ENCODE measurements at regions of chr1 and their contacts with region 1.

Region 1: DNA sequence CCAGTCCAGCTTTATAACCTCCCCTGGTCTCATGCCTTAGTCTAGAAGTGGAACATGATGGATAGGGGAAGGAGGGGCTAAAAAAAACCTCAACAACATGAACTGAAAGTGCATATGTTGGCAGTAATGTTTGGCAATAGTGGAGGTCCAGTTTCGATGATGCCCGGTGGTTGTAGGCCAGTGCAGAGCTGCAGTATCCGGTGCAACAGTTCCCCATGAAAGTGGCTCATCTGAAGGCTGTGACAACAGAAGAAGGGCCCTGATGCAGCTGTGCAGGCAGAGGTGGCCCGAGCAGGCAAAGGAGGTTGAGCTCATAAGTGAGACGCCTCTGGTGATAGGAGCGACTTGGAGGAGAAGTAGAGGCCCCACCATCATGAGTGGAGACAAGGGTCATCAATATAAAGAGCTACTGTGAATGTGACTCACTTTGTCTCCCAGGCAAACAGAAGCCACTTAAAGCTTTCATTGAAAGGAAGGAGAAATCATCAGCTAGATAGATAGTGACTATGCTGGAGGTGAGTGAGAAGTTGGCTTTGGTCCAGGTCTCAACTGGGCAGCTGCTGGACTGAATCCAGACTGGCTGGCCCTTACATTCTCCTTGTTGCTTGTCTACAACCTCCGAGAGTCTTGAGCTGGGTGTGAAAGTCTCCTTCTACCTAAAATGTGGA is 10.2 kb upstream of the CREG1 start:
- DNase-seq: peak; percentile 64 to 79 (median 69)
- ATAC-seq: peak; percentile 81
- H3K4me3 ChIP-seq: no peak overlapping the region
- H3K27ac ChIP-seq: 0 out of 3 replicates have a peak overlapping the region, but pooled peaks have one; percentile 8
- H3K4me1 ChIP-seq: peaks cover 10 to 25% of the 10 kb centered on the region in 2 experiments
- H3K27me3 ChIP-seq: no peaks in the 10 kb centered on the region
- CTCF ChIP-seq: no peak
- EP300 ChIP-seq: no peak
- POLR2A ChIP-seq: no peak
- RAD21 ChIP-seq: no peak

Region 2: GRCh38 chr1:167542109-167543032 is 21.3 kb before region 1 on chr1:
- CTCF ChIA-PET with region 1: no interaction called
- POLR2A ChIA-PET with region 1: interaction called, 13 read pairs
- in situ Hi-C with region 1: no loop called
- intact Hi-C with region 1: no loop called
- DNase-seq: peak in 1 of 4 experiments; percentile 13
- ATAC-seq: peak; percentile 8; the same call in 2 of the 3 replicates
- H3K4me3 ChIP-seq: no peak overlapping the region
- H3K27ac ChIP-seq: no peak overlapping the region
- H3K4me1 ChIP-seq: peaks cover 16 to 24% of the 10 kb centered on the region in 2 experiments; a peak in 4 of 5 replicates
- H3K27me3 ChIP-seq: no peaks in the 10 kb centered on the region
- CTCF ChIP-seq: no peak
- EP300 ChIP-seq: no peak
- POLR2A ChIP-seq: no peak
- RAD21 ChIP-seq: no peak

Region 3: GRCh38 chr1:167548059-167548932 is 15.4 kb before region 1 on chr1:
- CTCF ChIA-PET with region 1: no interaction called
- POLR2A ChIA-PET with region 1: interaction called, 42 read pairs
- in situ Hi-C with region 1: no loop called
- intact Hi-C with region 1: no loop called
- DNase-seq: peak in 3 of 4 experiments; percentile 48 to 87 (median 76)
- ATAC-seq: peak; percentile 41
- H3K4me3 ChIP-seq: peak overlapping the region; percentile 14
- H3K27ac ChIP-seq: peak overlapping the region; percentile 94
- H3K4me1 ChIP-seq: peaks cover 30 to 58% of the 10 kb centered on the region in 2 experiments
- H3K27me3 ChIP-seq: no peaks in the 10 kb centered on the region
- CTCF ChIP-seq: no peak
- EP300 ChIP-seq: peak; percentile 95
- POLR2A ChIP-seq: no peak
- RAD21 ChIP-seq: no peak